ENCODE measurements at regions of chr3 and their contacts with region 1.

Region 1: DNA sequence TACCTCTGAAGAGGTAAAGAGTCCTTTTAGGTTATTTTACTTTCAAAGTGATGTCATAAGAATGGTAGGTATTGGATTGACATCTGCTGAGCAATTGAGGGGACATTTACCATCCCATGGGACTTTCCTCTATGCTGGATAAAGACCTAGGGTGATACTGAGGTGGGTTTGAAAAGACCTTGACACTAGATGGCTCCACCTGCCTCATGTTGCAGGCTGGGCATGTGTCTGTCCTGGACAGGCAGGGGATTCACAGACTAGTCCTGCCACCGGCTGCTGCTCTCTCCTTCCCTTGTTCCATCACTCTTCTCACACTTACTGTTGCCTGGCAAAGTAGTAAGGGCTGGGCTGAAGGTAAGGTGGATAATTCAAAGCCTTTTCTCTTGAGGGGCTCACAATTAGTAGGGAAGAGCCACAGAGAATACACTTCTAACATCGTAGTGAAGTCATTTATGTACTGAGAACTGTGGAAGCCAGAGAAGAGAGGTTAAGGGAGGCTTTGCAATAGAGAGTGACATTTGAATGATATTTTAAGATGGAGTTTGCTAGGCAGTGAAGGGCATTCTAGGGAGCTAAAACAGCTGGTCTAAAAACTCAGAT is 27.7 kb downstream of the TRAK1 start:
- DNase-seq: peak; percentile 86
- CTCF ChIP-seq: peak; percentile 47

Region 2: DNA sequence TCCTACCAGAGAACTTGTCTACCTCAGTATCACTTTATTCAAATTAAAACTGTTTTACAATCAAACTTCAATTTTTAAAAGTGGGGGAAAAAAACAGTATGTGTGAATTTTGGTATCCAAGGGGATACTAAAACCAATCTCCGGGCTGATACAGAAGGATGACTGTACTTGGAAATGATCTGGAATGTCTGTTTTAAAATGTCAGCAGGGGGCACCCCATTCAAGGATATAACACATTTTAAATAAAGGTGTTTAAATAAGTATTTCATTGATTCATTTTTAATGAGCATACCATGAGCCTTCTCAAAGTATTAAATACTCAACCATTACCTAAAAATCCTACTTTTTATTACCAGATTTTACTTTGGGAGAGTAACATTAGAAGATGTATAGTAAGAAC is 224.9 kb before region 1 on chr3:
- in situ Hi-C with region 1: loop called (anchors 10 kb)
- DNase-seq: peak; percentile 35
- CTCF ChIP-seq: no peak

Region 3: GRCh38 chr3:42214565-42215283 is 95.9 kb after region 1 on chr3:
- in situ Hi-C with region 1: loop called (anchors 5 kb)
- DNase-seq: peak; percentile 65
- CTCF ChIP-seq: no peak

Region 4: DNA sequence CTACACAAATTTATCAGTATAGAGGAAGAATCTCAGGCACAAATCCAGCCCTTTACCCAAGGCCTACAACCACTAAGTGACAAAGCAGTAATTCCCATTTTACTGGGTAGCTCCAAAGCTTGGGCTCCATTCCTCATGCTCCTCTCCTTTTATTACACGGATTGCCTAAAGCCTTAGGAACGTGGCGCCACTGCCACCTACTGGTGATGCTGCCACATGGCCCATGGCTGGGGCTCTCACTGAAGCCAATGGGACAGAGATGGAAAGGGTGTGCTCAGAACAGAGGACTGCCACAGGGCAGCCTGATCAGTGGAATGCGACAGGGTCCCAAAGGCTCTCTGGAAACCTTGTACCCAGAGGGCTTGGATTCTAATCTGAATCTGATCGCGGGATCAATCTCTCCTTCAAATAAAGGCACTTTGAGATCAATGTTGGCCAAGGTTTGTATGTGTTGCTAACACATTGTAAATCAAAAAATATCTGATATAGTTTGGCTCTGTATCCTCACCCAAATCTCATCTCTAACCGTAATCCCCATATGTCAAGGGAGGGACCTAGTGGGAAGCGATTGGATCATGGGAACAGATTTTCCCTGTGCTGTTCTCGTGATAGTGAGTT is 325.1 kb after region 1 on chr3:
- in situ Hi-C with region 1: loop called (anchors 25 kb)
- DNase-seq: peak; percentile 83
- CTCF ChIP-seq: peak; percentile 94

Measured in GM13976 (cell line).